MCF 10A (cell line): ENCODE measurements at regions of chr17 and their contacts with region 1.

Region 1: DNA sequence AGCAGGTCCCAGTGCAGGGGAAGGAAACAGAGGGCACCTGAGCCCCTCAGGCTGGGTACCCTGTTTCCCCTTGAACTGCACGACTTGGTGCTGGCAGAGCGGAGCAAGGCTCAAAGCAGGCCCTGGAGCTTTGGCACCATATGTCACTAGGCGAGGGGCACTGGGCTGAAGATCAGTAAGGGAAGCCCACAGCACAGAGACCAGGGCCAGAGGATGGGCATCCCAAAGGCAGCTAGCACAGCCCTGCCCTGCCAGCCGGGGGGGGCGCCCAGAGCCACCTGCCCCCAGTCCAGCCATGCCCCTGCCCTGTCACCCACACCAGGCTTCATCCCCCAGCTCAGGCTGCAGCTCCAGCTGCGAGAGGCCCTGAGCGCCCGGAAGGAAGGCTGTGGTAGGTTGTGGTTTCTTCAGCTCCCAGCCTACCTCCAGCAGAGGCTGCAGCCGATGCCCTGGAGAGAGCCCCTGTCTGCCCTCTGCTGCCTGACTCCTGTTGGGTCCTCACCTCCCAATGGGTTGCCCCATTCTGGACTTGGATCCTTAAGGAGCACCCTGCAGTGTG is 10.9 kb downstream of the NHERF1 start:
- DNase-seq: no peak
- H3K4me3 Mint-ChIP-seq: peak overlapping the region; percentile 61
- H3K27ac Mint-ChIP-seq: peak overlapping the region; percentile 83
- H3K4me1 Mint-ChIP-seq: peaks cover 24% of the 10 kb centered on the region
- H3K27me3 Mint-ChIP-seq: no peaks in the 10 kb centered on the region
- CTCF ChIP-seq: no peak

Region 2: GRCh38 chr17:74610108-74610507 is 149.2 kb before region 1 on chr17:
- CTCF ChIA-PET with region 1: no interaction called
- POLR2A ChIA-PET with region 1: no interaction called
- intact Hi-C with region 1: no loop called
- DNase-seq: peak; percentile 33
- H3K4me3 Mint-ChIP-seq: no peak overlapping the region
- H3K27ac Mint-ChIP-seq: no peak overlapping the region
- H3K4me1 Mint-ChIP-seq: peaks cover 10% of the 10 kb centered on the region
- H3K27me3 Mint-ChIP-seq: peaks cover 17% of the 10 kb centered on the region
- CTCF ChIP-seq: no peak

Region 3: DNA sequence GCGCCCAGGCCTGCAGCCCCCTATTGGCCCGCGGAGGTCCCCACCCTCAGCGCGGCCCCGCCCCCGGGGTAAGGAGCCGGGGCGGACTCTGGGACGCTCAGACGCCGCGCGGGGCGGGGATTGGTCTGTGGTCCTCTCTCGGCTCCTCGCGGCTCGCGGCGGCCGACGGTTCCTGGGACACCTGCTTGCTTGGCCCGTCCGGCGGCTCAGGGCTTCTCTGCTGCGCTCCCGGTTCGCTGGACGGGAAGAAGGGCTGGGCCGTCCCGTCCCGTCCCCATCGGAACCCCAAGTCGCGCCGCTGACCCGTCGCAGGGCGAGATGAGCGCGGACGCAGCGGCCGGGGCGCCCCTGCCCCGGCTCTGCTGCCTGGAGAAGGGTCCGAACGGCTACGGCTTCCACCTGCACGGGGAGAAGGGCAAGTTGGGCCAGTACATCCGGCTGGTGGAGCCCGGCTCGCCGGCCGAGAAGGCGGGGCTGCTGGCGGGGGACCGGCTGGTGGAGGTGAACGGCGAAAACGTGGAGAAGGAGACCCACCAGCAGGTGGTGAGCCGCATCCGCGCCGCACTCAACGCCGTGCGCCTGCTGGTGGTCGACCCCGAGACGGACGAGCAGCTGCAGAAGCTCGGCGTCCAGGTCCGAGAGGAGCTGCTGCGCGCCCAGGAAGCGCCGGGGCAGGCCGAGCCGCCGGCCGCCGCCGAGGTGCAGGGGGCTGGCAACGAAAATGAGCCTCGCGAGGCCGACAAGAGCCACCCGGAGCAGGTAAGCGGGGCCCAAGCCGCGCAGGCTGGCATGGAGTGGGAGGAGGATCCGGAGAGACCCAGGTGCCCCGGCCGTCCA is 10.6 kb before region 1 on chr17 and contains the start of gene NHERF1:
- CTCF ChIA-PET with region 1: interaction called, 35 read pairs
- POLR2A ChIA-PET with region 1: interaction called, 29 read pairs
- intact Hi-C with region 1: no loop called
- DNase-seq: peak; percentile 94
- H3K4me3 Mint-ChIP-seq: peak within 1 kb of the TSS; percentile 88
- H3K27ac Mint-ChIP-seq: peak within 1 kb of the TSS; percentile 57
- H3K4me1 Mint-ChIP-seq: peaks cover 34% of the 10 kb centered on the region
- H3K27me3 Mint-ChIP-seq: no peaks in the 10 kb centered on the region
- CTCF ChIP-seq: no peak
- total RNA-seq, gene NHERF1: 23.9 and 25.3 TPM in 2 replicates

Region 4: GRCh38 chr17:74770498-74771318 is 11.4 kb after region 1 on chr17:
- CTCF ChIA-PET with region 1: interaction called, 60 read pairs
- POLR2A ChIA-PET with region 1: interaction called, 21 read pairs
- intact Hi-C with region 1: no loop called
- DNase-seq: peak; percentile 80
- H3K4me3 Mint-ChIP-seq: no peak overlapping the region
- H3K27ac Mint-ChIP-seq: peak overlapping the region; percentile 19
- H3K4me1 Mint-ChIP-seq: peaks cover 25% of the 10 kb centered on the region
- H3K27me3 Mint-ChIP-seq: no peaks in the 10 kb centered on the region
- CTCF ChIP-seq: peak; percentile 93

Region 5: DNA sequence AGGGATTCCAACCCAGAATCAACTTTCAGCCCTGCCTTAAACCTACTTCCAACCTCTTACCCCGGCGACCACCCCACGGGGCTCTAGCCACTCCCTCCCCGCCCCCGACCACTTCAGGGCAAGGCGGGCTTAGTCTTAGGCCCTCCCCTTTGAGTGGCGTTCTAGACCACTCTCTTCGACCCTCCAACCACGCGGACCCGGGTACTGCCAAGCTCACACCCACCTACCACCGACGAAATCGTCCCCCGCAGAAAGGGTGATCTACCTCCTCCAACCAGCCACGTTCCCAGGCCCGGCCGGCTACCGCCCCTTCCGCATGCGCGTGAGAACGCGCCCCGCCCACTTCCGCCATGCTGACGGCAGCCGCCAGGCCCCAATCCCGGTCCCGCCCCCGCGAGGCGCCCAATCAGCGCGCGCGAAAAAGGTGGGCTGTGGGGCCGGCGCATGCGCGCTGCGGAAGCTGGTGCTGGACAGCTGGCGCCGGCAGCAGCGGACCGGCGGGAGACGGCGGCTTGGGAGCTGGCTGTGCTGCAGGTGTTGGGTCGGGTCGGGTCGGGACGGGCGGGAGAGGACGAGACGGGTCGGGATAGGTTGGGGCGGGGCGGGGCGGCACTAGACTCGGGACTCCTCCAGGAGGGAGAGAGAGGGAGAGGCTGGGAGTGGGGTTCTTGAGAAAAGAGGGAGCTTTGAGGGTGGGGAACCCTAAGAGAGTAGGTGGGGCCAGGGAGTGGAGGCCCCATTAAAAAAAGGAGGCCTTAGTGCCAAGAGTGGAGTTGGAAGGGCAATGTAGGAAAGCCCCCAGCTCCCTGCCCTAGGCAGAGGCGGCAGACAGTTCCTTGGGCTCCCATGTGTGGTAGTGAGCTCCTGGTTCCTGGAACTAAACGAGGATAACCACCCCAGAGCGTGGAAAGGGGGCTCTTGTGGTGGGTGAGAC is 17.0 kb after region 1 on chr17 and contains the start of gene NAT9:
- CTCF ChIA-PET with region 1: interaction called, 60 read pairs
- POLR2A ChIA-PET with region 1: interaction called, 21 read pairs
- intact Hi-C with region 1: no loop called
- DNase-seq: peak; percentile 95
- H3K4me3 Mint-ChIP-seq: peak within 1 kb of the TSS; percentile 100
- H3K27ac Mint-ChIP-seq: peak within 1 kb of the TSS; percentile 98
- H3K4me1 Mint-ChIP-seq: peaks cover 16% of the 10 kb centered on the region
- H3K27me3 Mint-ChIP-seq: no peaks in the 10 kb centered on the region
- CTCF ChIP-seq: no peak
- total RNA-seq, gene NAT9: 58.1 and 64.8 TPM in 2 replicates

Region 6: DNA sequence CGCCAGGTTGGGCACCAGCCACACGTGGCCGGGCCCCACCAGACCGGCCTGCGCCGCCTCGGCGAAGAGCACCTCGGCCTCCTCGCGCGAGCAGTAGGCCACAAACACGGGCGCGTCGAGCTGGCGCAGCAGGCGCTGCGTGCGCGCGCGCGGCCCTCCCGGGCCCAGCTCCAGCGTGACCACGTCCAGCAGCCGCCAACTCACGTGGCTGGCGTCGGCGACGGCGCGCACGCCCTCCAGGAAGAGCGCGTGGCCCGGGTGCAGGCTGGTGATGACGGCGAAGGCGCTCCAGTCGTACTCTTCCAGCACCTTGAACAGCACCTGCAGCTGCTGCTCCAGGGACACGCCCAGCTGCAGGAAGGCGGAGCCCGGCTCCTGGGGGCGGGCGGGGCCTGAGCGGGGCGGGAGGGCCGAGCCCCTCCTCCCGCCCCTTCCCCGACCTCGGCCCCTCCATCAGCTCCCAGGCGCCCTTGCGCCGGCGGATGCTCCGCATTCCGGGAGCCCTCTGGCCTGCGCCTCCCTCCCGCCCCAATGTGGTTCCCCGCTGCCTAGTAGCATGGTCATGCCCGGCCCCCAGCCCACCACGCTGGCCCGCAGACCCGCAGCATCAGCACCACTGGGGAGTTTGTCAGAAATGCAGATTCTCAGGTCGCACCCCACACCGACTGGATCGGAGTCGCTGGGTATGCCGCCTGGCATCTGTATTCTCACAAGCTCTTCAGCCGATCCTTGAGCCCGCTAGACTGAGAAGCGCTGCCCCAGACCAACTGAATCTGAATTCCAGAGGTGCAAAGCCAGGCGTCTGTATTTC is 93.1 kb after region 1 on chr17:
- CTCF ChIA-PET with region 1: no interaction called
- POLR2A ChIA-PET with region 1: no interaction called
- intact Hi-C with region 1: no loop called
- DNase-seq: no peak
- H3K4me3 Mint-ChIP-seq: no peak overlapping the region
- H3K27ac Mint-ChIP-seq: no peak overlapping the region
- H3K4me1 Mint-ChIP-seq: no peaks in the 10 kb centered on the region
- H3K27me3 Mint-ChIP-seq: peaks cover 54% of the 10 kb centered on the region
- CTCF ChIP-seq: no peak

Region 7: GRCh38 chr17:75576661-75577060 is 817.3 kb after region 1 on chr17:
- CTCF ChIA-PET with region 1: no interaction called
- POLR2A ChIA-PET with region 1: no interaction called
- intact Hi-C with region 1: no loop called
- DNase-seq: no peak
- H3K4me3 Mint-ChIP-seq: no peak overlapping the region
- H3K27ac Mint-ChIP-seq: no peak overlapping the region
- H3K4me1 Mint-ChIP-seq: no peaks in the 10 kb centered on the region
- H3K27me3 Mint-ChIP-seq: no peaks in the 10 kb centered on the region
- CTCF ChIP-seq: no peak